ENCODE measurements at regions of chr2 and their contacts with region 1.

Region 1: DNA sequence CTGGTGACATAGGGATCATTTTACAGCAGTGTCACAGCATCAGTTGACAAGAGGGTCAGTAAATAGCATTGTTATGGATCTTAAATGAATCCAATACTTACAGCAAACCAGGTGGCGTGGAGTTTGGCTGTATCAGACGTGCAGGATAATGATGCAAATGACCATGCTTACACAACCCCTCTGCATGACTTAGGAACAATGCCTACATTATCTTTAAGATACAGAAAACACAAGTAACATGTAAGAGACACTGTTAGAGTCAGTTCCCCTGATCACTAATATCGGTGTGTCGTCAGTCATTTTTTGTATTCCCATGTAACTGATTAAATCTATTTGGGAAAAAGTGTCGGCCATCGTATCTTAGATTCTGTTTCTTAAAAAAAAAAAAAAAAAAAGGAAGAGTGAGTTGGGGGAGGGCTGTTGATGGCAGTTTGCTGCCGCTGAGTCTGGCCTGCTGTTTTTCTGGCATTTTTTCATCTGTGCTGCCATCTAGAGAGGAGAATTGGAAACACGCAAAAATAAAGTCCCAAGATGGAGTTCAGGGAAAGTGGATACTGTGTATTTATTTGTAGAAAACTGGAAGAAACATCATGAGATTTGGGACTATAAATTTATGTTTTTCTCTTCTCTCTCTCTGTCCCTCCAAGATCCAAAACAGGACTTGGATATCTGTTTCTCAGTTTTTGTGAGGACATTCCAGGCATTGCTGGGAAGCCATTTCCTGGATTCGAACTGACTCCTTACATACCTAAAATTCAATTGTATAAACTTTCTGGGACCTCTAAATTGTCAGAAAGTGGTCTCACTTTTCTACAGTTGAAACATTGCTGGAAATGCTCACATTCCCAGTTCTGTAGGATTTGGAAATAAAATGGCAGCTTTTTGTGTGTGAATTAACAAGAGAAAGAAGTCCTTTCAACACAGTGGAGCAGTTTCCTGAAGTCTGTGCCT is 60.3 kb upstream of the AGPS start:
- DNase-seq: peak; percentile 73
- H3K4me3 Mint-ChIP-seq: no peak overlapping the region
- H3K27ac Mint-ChIP-seq: no peak overlapping the region
- H3K4me1 Mint-ChIP-seq: peaks cover 8% of the 10 kb centered on the region
- H3K27me3 Mint-ChIP-seq: no peaks in the 10 kb centered on the region
- CTCF ChIP-seq: peak; percentile 60

Region 2: GRCh38 chr2:177212106-177212890 is 120.0 kb before region 1 on chr2 and contains the start of gene HNRNPA3:
- CTCF ChIA-PET with region 1: no interaction called
- POLR2A ChIA-PET with region 1: interaction called, 5 read pairs
- intact Hi-C with region 1: loop called (anchors 5 kb)
- DNase-seq: peak; percentile 98
- H3K4me3 Mint-ChIP-seq: peak within 1 kb of the TSS; percentile 91
- H3K27ac Mint-ChIP-seq: peak within 1 kb of the TSS; percentile 100
- H3K4me1 Mint-ChIP-seq: peaks cover 13% of the 10 kb centered on the region
- H3K27me3 Mint-ChIP-seq: no peaks in the 10 kb centered on the region
- CTCF ChIP-seq: no peak
- total RNA-seq, gene HNRNPA3: 142 and 179 TPM in 2 replicates

Region 3: DNA sequence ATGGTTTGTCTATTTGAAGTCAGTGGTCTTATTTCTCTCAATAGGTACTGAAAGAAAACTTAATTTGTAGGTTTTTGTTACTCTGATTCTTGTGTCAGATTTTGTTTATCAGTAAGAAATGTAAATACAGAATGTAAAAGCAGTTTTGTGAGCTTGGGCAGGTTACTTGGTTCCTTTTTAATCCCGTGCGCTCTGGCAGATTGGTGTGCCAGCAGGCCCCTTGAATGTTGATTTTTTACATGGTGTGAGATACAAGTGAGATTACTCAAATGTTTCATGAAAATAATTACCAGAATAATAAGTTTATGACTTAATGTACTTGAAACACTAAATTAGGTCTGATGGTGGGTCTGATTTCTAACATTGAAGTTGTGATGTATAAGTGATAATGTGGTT is 106.4 kb before region 1 on chr2:
- CTCF ChIA-PET with region 1: no interaction called
- POLR2A ChIA-PET with region 1: no interaction called
- intact Hi-C with region 1: no loop called
- DNase-seq: no peak
- H3K4me3 Mint-ChIP-seq: no peak overlapping the region
- H3K27ac Mint-ChIP-seq: peak overlapping the region; percentile 64
- H3K4me1 Mint-ChIP-seq: peaks cover 18% of the 10 kb centered on the region
- H3K27me3 Mint-ChIP-seq: no peaks in the 10 kb centered on the region
- CTCF ChIP-seq: no peak

Region 4: GRCh38 chr2:177392373-177393202 is 60.3 kb after region 1 on chr2 and contains the start of gene AGPS:
- CTCF ChIA-PET with region 1: interaction called, 44 read pairs
- POLR2A ChIA-PET with region 1: interaction called, 7 read pairs
- intact Hi-C with region 1: no loop called
- DNase-seq: peak; percentile 71
- H3K4me3 Mint-ChIP-seq: peak within 1 kb of the TSS; percentile 96
- H3K27ac Mint-ChIP-seq: peak within 1 kb of the TSS; percentile 97
- H3K4me1 Mint-ChIP-seq: peaks cover 48% of the 10 kb centered on the region
- H3K27me3 Mint-ChIP-seq: no peaks in the 10 kb centered on the region
- CTCF ChIP-seq: peak; percentile 14
- total RNA-seq, gene AGPS: 49.5 and 50.5 TPM in 2 replicates

Region 5: DNA sequence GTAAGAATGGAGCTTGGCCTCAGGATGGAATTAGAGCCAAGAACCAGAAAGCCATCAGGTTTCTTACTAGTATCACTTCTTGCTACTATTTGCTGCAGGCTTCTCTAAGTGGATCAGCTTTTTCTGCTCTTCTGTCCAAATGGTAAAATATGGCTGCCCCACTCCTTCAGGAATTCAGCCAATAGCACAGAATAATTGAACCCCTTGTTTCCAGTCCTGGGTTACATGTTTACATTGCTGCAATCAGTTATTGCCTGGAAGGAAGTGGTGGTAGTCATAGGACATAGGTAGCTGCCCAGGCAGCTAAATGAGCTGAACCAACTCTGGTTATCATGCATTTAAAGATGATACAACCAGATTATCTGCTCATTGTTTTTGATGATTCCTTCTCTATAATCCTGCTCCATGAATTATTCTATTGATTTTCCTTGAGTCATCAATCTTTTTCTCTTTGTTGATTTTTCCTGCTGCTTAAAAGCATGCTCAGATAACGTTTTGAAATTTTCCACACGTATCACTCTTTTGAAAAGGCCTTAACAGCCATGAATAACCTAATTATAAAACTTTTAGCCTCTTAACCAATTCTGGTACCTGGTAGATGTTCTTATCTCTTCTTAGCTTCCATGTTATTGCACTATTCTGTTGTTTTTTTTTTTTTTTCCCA is 72.8 kb after region 1 on chr2:
- CTCF ChIA-PET with region 1: interaction called, 10 read pairs
- POLR2A ChIA-PET with region 1: interaction called, 3 read pairs
- intact Hi-C with region 1: no loop called
- DNase-seq: no peak
- H3K4me3 Mint-ChIP-seq: no peak overlapping the region
- H3K27ac Mint-ChIP-seq: no peak overlapping the region
- H3K4me1 Mint-ChIP-seq: peaks cover 27% of the 10 kb centered on the region
- H3K27me3 Mint-ChIP-seq: no peaks in the 10 kb centered on the region
- CTCF ChIP-seq: no peak

Region 6: GRCh38 chr2:177489719-177490301 is 157.5 kb after region 1 on chr2:
- CTCF ChIA-PET with region 1: interaction called, 4 read pairs
- POLR2A ChIA-PET with region 1: no interaction called
- intact Hi-C with region 1: loop called (anchors 2 kb)
- DNase-seq: peak; percentile 52
- H3K4me3 Mint-ChIP-seq: no peak overlapping the region
- H3K27ac Mint-ChIP-seq: no peak overlapping the region
- H3K4me1 Mint-ChIP-seq: no peaks in the 10 kb centered on the region
- H3K27me3 Mint-ChIP-seq: no peaks in the 10 kb centered on the region
- CTCF ChIP-seq: peak; percentile 55

Region 7: DNA sequence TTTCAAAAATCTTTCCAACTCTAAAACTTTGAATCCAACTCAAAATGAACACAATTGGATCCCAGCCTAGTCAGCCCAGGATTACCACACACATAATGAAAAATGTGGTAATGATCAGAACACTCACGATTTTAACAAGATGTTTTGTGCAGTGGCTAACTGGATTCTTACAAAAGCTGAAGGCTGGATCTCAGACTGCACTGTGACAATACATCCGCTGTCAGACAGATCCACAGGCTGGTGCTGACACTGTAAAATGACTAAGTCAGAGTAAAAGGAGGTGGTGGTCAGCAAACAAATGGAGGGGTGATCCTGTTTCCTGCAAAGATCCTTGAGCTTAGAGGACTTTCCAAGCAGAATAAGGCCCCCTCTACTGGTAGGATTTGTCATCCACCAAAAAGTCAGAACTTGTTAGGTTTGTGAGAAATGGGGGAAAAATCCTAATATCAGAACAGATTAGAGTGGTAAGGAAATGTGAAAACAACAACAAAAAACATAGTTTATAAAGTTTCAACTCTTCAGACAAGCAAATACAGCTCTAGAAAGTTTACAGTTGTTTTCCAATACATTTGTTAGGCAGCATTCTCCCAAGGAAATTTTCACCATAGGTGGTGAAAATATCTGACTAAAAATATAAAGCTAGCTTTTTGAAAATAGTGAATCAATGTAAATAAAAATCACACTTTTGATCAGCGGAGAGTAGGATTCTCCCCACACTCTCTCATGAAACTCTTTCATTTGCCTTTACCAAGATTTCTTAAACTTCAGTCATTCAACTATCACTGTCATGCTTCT is 272.2 kb after region 1 on chr2:
- CTCF ChIA-PET with region 1: interaction called, 9 read pairs
- POLR2A ChIA-PET with region 1: no interaction called
- intact Hi-C with region 1: loop called (anchors 1 kb)
- DNase-seq: peak; percentile 58
- H3K4me3 Mint-ChIP-seq: no peak overlapping the region
- H3K27ac Mint-ChIP-seq: no peak overlapping the region
- H3K4me1 Mint-ChIP-seq: peaks cover 5% of the 10 kb centered on the region
- H3K27me3 Mint-ChIP-seq: peaks cover 5% of the 10 kb centered on the region
- CTCF ChIP-seq: peak; percentile 42

Region 8: DNA sequence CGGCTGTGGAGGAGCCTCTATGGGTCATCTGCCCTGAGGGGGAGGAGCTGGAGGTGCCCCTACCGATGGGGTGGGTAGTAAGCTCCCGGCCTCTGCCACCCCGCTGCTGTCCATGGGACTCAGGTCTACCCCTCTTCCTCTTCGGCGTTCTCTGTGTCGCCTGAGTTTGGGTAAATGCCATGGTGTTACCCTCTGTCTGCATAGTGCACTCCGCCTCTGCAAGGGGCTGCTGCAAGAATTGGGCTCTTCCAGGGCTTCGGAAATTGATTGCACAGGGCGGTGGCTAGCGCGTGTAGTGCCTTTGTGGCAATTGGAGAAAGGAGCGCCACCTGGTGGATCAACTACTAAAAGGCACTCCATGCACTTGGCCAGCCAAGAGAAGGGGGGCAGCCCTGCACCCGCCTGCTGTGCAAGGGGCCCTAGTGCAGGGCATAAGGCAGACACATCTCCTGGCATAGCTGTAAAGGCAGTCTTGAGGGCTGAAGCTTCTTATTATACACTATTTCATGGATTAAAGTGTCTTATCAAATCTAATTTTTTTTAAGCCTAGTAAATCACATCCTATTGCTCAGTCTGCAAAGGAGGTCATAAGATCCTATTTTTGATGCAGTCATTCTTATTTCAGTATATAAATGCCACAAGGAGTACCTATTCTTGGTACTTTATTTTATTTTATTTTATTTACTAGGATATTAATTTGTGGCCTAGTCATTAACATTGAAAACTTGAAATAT is 431.4 kb after region 1 on chr2:
- CTCF ChIA-PET with region 1: interaction called, 9 read pairs
- POLR2A ChIA-PET with region 1: no interaction called
- intact Hi-C with region 1: loop called (anchors 1 kb)
- DNase-seq: peak; percentile 78
- H3K4me3 Mint-ChIP-seq: no peak overlapping the region
- H3K27ac Mint-ChIP-seq: no peak overlapping the region
- H3K4me1 Mint-ChIP-seq: no peaks in the 10 kb centered on the region
- H3K27me3 Mint-ChIP-seq: peaks cover 16% of the 10 kb centered on the region
- CTCF ChIP-seq: peak; percentile 65